Vagina (tissue), 2 donors: ENCODE measurements at regions of chr4 and their contacts with region 1.

Region 1: DNA sequence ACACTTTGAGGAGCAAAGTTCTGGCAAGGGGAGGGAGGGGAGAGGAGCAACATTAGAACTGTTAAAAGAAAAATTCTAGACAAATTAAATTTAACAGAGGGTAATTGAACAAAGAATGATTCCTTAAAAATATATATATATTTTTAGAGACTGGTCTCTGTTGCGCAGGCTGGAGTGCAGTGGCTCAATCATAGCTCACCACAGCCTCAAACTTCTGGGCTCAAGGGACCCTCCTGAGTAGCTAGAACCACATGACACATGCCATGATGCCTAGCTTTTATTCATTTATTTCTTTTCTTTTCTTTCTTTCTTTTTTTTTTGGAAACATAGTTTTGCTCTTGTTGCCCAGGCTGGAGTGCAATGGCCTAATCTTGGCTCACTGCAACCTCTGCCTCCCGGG is 19.1 kb upstream of the SPINK2 start:
- DNase-seq: no peak
- H3K4me3 ChIP-seq: no peak overlapping the region
- H3K27ac ChIP-seq: no peak overlapping the region
- H3K4me1 ChIP-seq: no peaks in the 10 kb centered on the region
- H3K27me3 ChIP-seq: no peaks in the 10 kb centered on the region
- CTCF ChIP-seq: no peak
- POLR2A ChIP-seq: no peak

Region 2: GRCh38 chr4:56871371-56871866 is 30.9 kb after region 1 on chr4:
- intact Hi-C with region 1: loop called (anchors 2 kb)
- DNase-seq: no peak
- H3K4me3 ChIP-seq: peak overlapping the region in 1 of 2 donors; percentile 16
- H3K27ac ChIP-seq: no peak overlapping the region
- H3K4me1 ChIP-seq: peaks cover 7% of the 10 kb centered on the region
- H3K27me3 ChIP-seq: no peaks in the 10 kb centered on the region
- CTCF ChIP-seq: no peak
- POLR2A ChIP-seq: no peak